ENCODE measurements at regions of chr9 and their contacts with region 1.

Region 1: DNA sequence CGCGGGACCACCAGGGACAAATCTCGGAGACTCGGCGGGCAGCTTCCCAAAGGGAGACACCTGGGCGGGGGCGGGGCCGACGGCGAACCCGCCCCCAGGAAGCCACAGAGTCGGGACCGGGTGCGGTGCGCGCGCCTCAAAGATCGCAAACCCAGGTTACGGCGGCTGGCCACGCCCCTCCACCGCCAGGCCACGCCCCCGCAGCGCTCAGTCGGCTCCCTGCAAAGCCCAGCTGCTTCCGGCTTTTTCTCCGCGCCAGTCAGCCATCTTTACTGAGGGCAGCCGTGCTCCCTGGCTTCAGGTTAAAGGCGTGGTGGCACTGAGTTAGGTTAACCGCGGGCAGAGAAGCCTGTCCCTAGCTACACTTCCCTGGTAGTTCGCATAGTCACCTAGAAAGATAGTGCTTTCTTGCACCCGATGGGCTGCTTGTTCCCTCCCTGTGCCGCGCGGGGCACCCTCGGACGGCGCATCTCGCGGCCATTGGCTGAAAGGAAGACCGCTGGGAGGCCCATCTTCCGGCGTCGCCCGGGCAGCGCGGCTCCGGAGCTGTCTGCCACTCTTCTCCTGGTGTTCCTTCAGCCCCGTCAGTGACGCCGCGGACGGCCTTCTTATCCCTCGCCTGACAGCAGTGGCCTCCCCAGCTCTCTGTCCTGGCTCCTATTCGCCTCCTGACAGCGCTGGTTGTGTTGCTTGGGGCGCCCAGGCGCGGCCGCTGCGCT is at the start of gene TBC1D2:
- DNase-seq: peak; percentile 81 to 97
- H3K4me3 ChIP-seq: peak within 1 kb of the TSS; percentile 71 to 72
- H3K27ac ChIP-seq: peak within 1 kb of the TSS; percentile 91 to 95
- H3K4me1 ChIP-seq: peaks cover 0 to 15% of the 10 kb centered on the region in 2 donors
- H3K27me3 ChIP-seq: no peaks in the 10 kb centered on the region
- CTCF ChIP-seq: peak in 1 of 3 experiments; percentile 10
- total RNA-seq, gene TBC1D2: 32.5 TPM

Region 2: DNA sequence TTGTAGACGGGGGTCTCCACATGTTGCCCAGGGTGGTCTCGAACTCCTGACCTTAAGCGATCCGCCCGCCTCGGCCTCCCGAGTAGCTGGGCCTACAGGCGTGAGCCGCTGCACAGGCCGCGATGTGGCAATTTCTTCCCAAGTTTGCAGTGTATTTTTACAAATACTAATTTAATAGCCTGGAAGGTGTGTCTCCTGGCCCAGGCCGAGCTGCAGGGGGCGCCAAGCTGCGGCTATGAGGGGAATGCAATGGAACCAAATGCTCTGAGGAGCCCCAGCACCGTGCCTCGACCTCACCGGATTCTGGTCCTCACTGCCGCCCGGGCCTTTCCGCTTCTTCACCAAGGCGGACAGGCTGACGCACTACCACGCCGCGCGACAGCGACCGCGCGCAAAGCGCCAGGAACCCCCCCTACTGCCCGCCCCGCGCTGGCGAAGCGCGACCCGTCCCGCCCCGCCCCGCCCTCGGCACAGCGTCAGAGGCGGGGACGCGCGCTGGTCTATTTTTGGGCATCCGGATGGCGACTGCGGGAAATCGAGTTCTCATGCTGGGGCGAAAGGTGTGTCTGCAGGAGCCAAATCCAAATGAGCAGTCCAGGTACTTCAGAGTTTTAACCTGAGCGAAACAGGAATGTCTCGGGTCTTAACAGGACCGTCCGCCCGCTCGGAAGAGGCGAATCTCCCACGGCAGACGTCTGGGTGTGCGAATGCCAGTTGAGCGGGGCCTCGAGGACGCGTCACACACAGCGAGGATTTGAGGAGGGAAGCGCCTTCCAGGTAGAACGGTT is 1569.0 kb before region 1 on chr9:
- intact Hi-C with region 1: loop called (anchors 5 kb)
- DNase-seq: peak; percentile 37 to 91
- H3K4me3 ChIP-seq: peak overlapping the region; percentile 62 to 74
- H3K27ac ChIP-seq: peak overlapping the region; percentile 63 to 79
- H3K4me1 ChIP-seq: peaks cover 0 to 5% of the 10 kb centered on the region in 2 donors
- H3K27me3 ChIP-seq: no peaks in the 10 kb centered on the region
- CTCF ChIP-seq: peak; percentile 23 to 52 (median 47)

Region 3: GRCh38 chr9:97982683-97983588 is 272.8 kb before region 1 on chr9 and contains the start of gene ANP32B:
- intact Hi-C with region 1: loop called (anchors 2 kb)
- DNase-seq: peak; percentile 63 to 95
- H3K4me3 ChIP-seq: peak within 1 kb of the TSS; percentile 86 to 91
- H3K27ac ChIP-seq: peak within 1 kb of the TSS; percentile 97 to 99
- H3K4me1 ChIP-seq: peaks cover 7 to 17% of the 10 kb centered on the region in 2 donors
- H3K27me3 ChIP-seq: no peaks in the 10 kb centered on the region
- CTCF ChIP-seq: peak; percentile 65 to 98 (median 71)
- total RNA-seq, gene ANP32B: 13.9 TPM

Region 4: GRCh38 chr9:98192503-98193335 is 63.0 kb before region 1 on chr9 and contains the start of gene CORO2A:
- intact Hi-C with region 1: loop called (anchors 2 kb)
- DNase-seq: peak in 1 of 2 donors; percentile 83
- H3K4me3 ChIP-seq: peak within 1 kb of the TSS; percentile 73 to 83
- H3K27ac ChIP-seq: peak within 1 kb of the TSS; percentile 18 to 61
- H3K4me1 ChIP-seq: no peaks in the 10 kb centered on the region
- H3K27me3 ChIP-seq: no peaks in the 10 kb centered on the region
- CTCF ChIP-seq: peak in 2 of 3 experiments; percentile 10 to 49
- total RNA-seq, gene CORO2A: 9.0 TPM

Region 5: GRCh38 chr9:98207606-98208005 is 48.1 kb before region 1 on chr9:
- intact Hi-C with region 1: no loop called
- DNase-seq: no peak
- H3K4me3 ChIP-seq: no peak overlapping the region
- H3K27ac ChIP-seq: no peak overlapping the region
- H3K4me1 ChIP-seq: no peaks in the 10 kb centered on the region
- H3K27me3 ChIP-seq: no peaks in the 10 kb centered on the region
- CTCF ChIP-seq: no peak

Region 6: DNA sequence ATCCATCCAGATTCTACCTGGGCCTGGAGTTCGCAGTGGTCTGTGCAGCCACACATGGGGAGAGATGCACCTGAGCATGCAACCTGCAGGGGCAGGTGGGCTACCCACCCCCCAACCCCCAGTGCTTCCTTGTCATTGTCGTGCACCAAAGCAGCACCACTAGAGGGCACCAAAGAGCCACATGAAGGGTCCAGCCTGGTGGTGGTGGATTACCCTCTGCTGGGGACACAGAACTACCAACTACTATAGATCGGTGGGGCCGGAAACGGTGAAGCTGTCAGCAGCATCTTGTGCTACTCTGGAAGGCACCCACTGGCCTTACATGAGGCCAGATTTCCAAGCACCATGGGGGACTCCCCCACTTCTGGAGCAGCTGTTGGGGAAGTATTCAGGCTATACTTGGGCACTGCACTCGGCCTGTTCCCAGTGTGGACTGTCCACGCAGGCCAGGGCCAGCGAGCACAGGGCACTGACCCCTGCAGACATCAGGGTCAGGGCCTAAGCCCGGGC is 59.9 kb after region 1 on chr9:
- intact Hi-C with region 1: no loop called
- DNase-seq: peak in 1 of 2 donors; percentile 79
- H3K4me3 ChIP-seq: no peak overlapping the region
- H3K27ac ChIP-seq: no peak overlapping the region
- H3K4me1 ChIP-seq: no peaks in the 10 kb centered on the region
- H3K27me3 ChIP-seq: no peaks in the 10 kb centered on the region
- CTCF ChIP-seq: peak; percentile 65 to 84 (median 71)